ENCODE measurements at regions of chr9 and their contacts with region 1.

Region 1: DNA sequence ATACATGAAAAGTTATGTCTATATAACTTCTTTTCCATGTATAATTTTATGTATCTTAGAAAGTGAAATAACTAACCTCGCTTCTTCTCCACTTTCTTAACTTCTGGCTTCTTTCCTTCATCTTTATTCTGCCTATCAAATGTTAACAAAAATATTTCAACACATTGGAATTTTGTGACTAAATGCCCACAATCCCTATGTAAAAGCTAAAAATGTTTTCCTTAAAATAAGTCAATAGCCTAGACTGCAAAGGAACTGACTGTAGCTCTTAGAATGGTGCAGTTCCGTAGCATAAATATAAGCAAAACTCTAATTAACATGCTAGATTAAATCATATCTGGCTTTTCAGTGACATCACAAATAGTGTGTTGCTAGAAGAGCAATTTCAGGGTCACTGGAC is 40.9 kb downstream of the PSIP1 start:
- DNase-seq: no peak
- ATAC-seq: no peak
- H3K4me3 ChIP-seq: no peak overlapping the region
- H3K4me3 Mint-ChIP-seq: no peak overlapping the region
- H3K27ac ChIP-seq: no peak overlapping the region
- H3K27ac Mint-ChIP-seq: peak overlapping the region in 1 of 2 donors; percentile 51
- H3K4me1 ChIP-seq: no peaks in the 10 kb centered on the region
- H3K4me1 Mint-ChIP-seq: no peaks in the 10 kb centered on the region
- H3K27me3 ChIP-seq: no peaks in the 10 kb centered on the region
- H3K27me3 Mint-ChIP-seq: no peaks in the 10 kb centered on the region
- CTCF ChIP-seq: no peak

Region 2: GRCh38 chr9:15529566-15530324 is 59.9 kb after region 1 on chr9:
- intact Hi-C with region 1: loop called (anchors 10 kb)
- DNase-seq: no peak
- ATAC-seq: peak in 1 of 3 donors; percentile 39
- H3K4me3 ChIP-seq: no peak overlapping the region
- H3K4me3 Mint-ChIP-seq: no peak overlapping the region
- H3K27ac ChIP-seq: no peak overlapping the region
- H3K27ac Mint-ChIP-seq: no peak overlapping the region
- H3K4me1 ChIP-seq: no peaks in the 10 kb centered on the region
- H3K4me1 Mint-ChIP-seq: no peaks in the 10 kb centered on the region
- H3K27me3 ChIP-seq: no peaks in the 10 kb centered on the region
- H3K27me3 Mint-ChIP-seq: no peaks in the 10 kb centered on the region
- CTCF ChIP-seq: no peak